Activated CD4-positive, alpha-beta T cell treated with anti-CD3 and anti-CD28 coated beads, Interleukin-2, amount 10 ng/mL, durations not matched to agents 7 days and 5 days (primary cell): ENCODE measurements at regions of chr20 and their contacts with region 1.

Region 1: DNA sequence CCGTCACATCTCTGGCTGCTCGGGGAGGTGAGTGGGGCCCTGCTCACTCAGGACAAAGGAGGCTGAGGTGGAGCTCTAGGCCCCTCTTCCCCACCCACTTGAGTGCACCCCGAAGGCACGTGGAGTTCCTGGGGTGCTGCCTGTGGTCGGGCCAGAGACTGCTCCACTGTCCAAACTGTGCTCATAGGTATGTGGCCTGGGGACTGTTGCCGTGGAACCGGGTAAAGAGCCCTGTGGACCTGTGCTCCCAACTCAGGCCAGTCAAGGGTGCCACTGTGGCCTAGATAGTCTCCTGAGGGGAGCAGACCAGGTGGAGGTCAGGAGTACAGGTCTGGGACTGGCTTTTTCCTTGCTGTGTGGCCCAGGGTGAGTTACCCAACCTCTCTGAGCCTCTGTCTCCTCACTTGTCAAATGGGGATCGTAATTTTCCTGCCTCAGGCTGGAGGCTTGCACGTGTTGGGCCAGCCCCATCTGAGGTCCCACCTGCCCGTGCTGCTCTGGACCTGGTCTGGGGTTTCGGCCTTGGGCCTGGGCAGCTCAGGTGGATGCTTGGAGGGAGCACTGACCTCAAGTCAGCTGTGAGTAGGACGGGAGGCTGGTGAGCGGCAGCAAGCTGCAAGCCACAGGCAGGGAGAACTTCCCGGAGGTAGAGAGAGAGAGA is 12.4 kb upstream of the NPBWR2 start:
- DNase-seq: no peak
- H3K4me3 Mint-ChIP-seq: no peak overlapping the region
- H3K27ac Mint-ChIP-seq: peak overlapping the region; percentile 76
- H3K4me1 Mint-ChIP-seq: peaks cover 9% of the 10 kb centered on the region
- H3K27me3 Mint-ChIP-seq: peaks cover 23% of the 10 kb centered on the region

Region 2: DNA sequence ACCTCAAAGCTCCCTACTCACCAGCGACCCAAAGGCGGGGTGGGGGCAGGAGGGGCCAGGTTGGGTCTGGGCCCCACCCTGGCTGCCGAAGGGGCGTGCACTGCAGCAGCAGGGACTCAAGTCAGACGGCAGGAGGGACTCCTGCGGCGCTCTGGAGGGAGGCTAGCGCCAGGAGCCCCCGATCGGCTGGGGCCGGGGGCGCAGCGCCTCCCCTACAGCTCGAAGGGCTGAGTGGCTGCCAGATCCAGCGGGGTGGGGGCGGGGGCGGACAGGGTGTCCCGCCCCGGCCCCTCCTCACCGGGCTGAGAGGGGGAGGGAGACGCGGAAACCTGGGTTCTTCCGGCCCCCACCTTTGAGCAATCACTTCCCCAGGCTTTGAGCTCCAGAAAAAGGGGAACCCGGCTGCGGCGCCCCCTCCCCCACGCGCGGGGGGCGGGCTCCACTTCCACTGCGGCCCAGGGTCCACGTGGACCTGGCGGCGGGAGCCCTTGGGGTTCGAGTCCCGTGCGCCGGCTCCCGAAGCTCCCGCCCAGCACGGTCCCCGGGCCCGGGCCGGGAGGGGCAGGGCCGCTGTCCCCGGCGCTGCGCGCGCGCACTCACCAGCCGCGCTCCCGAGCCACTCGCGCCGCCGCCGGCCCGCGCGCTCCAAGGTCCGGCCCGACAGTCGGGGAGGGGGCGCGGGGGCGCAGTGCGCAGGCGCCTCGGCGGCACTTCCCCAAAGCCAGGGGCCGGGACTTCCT is 40.4 kb before region 1 on chr20 and contains the start of gene RGS19:
- CTCF ChIA-PET with region 1: interaction called, 16 read pairs
- POLR2A ChIA-PET with region 1: no interaction called
- DNase-seq: peak; percentile 81
- H3K4me3 Mint-ChIP-seq: peak within 1 kb of the TSS; percentile 90
- H3K27ac Mint-ChIP-seq: peak within 1 kb of the TSS; percentile 83
- H3K4me1 Mint-ChIP-seq: peaks cover 50% of the 10 kb centered on the region
- H3K27me3 Mint-ChIP-seq: peaks cover 12% of the 10 kb centered on the region
- total RNA-seq, gene RGS19: 105 to 107 TPM

Region 3: GRCh38 chr20:64101731-64102621 is 17.8 kb before region 1 on chr20:
- CTCF ChIA-PET with region 1: interaction called, 10 read pairs
- POLR2A ChIA-PET with region 1: no interaction called
- DNase-seq: peak; percentile 63
- H3K4me3 Mint-ChIP-seq: no peak overlapping the region
- H3K27ac Mint-ChIP-seq: no peak overlapping the region
- H3K4me1 Mint-ChIP-seq: peaks cover 20% of the 10 kb centered on the region
- H3K27me3 Mint-ChIP-seq: peaks cover 23% of the 10 kb centered on the region

Region 4: DNA sequence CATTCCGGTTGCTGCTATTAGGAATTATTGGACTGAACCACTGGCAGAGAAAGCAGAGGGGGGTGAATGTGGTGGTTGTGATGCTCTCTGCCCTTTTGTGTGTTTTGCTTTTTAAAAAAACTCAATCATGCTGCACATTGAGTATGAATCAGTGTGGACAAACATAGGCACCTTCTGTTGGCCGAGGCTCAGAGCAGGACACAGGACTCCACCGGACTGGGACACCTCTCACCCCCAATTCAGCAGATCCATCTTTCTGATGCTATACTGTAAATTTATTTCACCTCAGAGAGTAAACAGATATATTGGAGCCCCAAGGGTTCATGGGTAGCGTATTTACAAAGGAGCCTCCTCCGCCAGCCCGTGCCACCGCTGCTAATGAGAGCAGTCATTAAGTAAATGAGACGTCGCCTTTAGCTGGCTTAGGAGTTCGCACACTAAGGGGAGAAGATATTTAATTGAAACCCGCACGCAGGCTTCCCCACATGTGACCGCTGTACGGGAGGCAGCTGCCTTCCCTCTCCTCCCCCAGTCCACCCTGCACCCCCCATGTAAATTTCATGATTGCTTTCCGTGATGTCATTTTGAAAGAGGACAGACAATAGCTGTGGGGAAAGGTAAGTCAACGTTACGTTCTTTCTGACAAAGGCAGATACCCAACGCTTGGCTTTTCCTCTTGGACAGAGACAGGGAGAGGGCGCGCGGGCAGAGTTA is 44.5 kb after region 1 on chr20 and contains the start of gene MYT1:
- CTCF ChIA-PET with region 1: no interaction called
- POLR2A ChIA-PET with region 1: no interaction called
- DNase-seq: no peak
- H3K4me3 Mint-ChIP-seq: no peak within 1 kb of the TSS
- H3K27ac Mint-ChIP-seq: no peak within 1 kb of the TSS
- H3K4me1 Mint-ChIP-seq: no peaks in the 10 kb centered on the region
- H3K27me3 Mint-ChIP-seq: peaks cover 35% of the 10 kb centered on the region
- total RNA-seq, gene MYT1: not detected

Region 5: DNA sequence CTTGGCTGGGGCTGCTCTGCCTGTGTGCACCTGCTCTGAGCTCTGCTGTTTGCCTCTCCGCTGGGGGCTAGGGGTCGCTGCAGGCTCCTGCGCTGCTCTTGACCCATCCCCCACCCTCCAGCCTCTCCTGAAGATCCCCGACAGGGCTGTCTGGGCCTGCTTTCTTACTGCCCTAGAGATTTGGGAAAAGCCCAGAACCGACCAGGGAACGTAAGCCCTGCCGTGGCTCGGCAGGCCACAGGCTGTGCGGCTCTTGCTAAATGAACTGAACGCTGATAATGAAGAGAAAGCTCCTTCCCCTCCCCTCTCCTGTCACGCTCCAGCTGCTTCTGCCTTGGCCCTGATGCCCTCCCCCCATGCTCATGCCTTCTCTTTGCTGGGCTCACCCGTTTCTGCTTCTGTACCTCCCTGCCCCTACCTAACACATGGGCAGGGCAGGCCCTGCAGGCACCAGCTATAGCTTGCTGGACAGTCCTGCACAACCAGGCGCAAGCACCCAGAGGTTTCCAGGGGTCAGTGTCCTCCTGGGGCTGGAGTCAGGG is 103.8 kb after region 1 on chr20:
- CTCF ChIA-PET with region 1: no interaction called
- POLR2A ChIA-PET with region 1: no interaction called
- DNase-seq: no peak
- H3K4me3 Mint-ChIP-seq: no peak overlapping the region
- H3K27ac Mint-ChIP-seq: no peak overlapping the region
- H3K4me1 Mint-ChIP-seq: peaks cover 15% of the 10 kb centered on the region
- H3K27me3 Mint-ChIP-seq: no peaks in the 10 kb centered on the region